ENCODE measurements at regions of chr1 and their contacts with region 1.

Region 1: GRCh38 chr1:234114648-234115307 is 210.3 kb downstream of the SLC35F3 start:
- DNase-seq: no peak
- ATAC-seq: peak in 1 of 2 donors; percentile 68
- H3K4me3 ChIP-seq: no peak overlapping the region
- H3K27ac ChIP-seq: no peak overlapping the region
- H3K4me1 ChIP-seq: no peaks in the 10 kb centered on the region
- H3K27me3 ChIP-seq: no peaks in the 10 kb centered on the region
- CTCF ChIP-seq: peak; percentile 25 to 59 (median 46)
- POLR2A ChIP-seq: no peak

Region 2: DNA sequence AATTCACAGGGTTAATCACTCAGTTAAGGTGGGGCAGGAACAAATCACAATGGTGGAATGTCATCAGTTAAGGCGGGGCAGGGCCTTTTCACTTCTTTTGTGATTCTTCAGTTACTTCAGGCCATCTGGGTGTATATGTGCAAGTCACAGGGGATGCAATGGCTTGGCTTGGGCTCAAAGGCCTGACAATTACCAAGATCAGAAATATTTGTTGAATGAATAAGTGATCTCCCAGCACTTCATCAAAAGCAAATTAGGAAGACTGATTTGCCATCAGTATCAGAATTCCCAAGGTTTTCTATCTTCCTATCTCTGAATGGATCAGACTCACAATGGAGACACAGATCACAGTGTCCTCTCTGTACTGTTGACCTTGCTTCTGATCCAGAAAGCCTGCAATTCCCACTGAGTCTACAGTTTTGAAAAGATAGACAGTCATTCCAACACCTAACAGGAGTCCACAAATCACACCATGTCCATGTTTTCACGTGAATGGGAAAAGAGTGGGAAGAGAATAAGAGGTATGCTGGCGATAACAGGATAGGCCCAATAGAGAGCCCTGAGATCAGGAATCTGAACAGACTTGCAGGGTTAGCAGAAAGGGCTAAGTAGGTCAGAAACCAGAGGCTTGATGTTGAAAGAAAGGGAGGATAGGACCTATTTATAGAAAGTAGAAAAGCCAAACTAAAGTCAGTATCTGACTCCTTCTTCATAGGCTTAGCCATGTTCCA is 425.6 kb before region 1 on chr1:
- in situ Hi-C with region 1: no loop called
- intact Hi-C with region 1: no loop called
- DNase-seq: no peak
- ATAC-seq: no peak
- H3K4me3 ChIP-seq: no peak overlapping the region
- H3K27ac ChIP-seq: no peak overlapping the region
- H3K4me1 ChIP-seq: no peaks in the 10 kb centered on the region
- H3K27me3 ChIP-seq: no peaks in the 10 kb centered on the region
- CTCF ChIP-seq: no peak
- POLR2A ChIP-seq: no peak

Region 3: DNA sequence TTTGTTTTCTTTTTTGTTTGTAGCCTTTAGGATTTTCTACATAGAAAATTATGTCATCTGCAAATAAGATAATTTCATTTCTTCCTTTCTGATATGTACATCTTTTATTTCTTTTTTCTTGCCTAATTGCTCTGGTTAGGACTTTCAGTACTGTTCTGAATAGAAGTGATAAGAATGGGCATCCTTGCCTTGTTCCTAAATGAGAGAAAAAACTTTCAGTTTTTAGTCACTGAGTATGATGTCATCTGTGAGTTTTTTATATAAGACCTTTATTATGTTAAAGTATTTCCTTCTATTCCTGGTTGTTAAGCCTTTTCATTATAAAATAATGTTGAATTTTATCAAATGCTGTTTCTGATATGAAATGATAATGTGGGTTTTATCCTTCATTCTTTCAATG is 286.3 kb before region 1 on chr1:
- in situ Hi-C with region 1: no loop called
- intact Hi-C with region 1: no loop called
- DNase-seq: no peak
- ATAC-seq: no peak
- H3K4me3 ChIP-seq: no peak overlapping the region
- H3K27ac ChIP-seq: no peak overlapping the region
- H3K4me1 ChIP-seq: no peaks in the 10 kb centered on the region
- H3K27me3 ChIP-seq: no peaks in the 10 kb centered on the region
- CTCF ChIP-seq: no peak
- POLR2A ChIP-seq: no peak

Region 4: GRCh38 chr1:234170622-234171021 is 55.8 kb after region 1 on chr1:
- in situ Hi-C with region 1: no loop called
- intact Hi-C with region 1: no loop called
- DNase-seq: no peak
- ATAC-seq: no peak
- H3K4me3 ChIP-seq: no peak overlapping the region
- H3K27ac ChIP-seq: no peak overlapping the region
- H3K4me1 ChIP-seq: peaks cover 0 to 18% of the 10 kb centered on the region in 2 donors
- H3K27me3 ChIP-seq: no peaks in the 10 kb centered on the region
- CTCF ChIP-seq: no peak
- POLR2A ChIP-seq: no peak

Region 5: GRCh38 chr1:235100194-235100772 is 985.5 kb after region 1 on chr1:
- in situ Hi-C with region 1: no loop called
- intact Hi-C with region 1: loop called (anchors 5 kb)
- DNase-seq: no peak
- ATAC-seq: no peak
- H3K4me3 ChIP-seq: no peak overlapping the region
- H3K27ac ChIP-seq: peak overlapping the region in 1 of 4 donors; percentile 24
- H3K4me1 ChIP-seq: peaks cover 9 to 14% of the 10 kb centered on the region in 2 donors
- H3K27me3 ChIP-seq: no peaks in the 10 kb centered on the region
- CTCF ChIP-seq: no peak
- POLR2A ChIP-seq: no peak

Measured in gastrocnemius medialis (tissue), 4 donors.